Right cardiac atrium (tissue), 5 donors: ENCODE measurements at regions of chr20 and their contacts with region 1.

Region 1: DNA sequence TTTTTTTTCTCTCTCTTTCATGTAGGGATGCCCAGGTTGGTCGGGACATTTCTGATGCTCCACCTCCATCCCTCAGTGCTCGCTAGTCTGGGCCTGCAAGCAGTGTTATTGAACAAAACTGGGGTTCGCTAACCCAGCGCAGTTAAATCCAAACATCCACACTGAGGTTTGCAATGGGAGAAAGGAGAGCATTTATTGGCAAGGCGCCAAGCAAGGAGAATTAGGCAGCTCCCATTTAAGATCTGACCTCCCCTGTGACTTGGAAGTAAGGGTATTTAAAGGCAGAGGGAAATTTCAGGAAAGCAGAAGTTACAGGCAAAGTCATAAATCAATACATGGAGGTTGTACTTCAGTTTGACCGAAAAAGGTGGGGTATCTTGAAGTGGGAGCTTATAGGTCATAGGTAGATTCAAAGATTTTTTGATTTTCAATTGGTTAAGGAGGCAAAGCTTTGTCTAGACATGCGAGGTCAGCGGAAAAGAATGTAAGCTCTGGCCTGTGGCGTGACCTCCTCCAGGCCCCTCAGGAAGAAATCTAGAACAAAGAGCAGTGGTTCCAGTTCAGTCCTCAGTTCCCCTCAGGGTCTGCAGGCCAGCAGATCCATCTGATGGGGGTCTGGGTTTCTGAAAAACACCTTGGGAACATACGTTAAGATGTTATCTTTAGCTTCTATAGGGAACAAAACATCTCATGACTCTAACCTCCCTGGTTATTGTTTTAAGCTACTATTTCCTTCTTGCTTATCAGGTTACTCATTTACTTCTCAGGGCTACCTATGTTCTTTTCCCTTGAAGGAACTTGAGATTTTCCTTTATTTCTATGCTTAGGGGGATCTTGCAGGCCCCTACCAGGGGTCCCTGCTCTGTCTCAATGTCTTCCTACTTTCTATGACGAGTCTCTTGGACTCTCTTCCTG is 66.0 kb upstream of the KIF16B start:
- DNase-seq: no peak
- ATAC-seq: no peak
- H3K4me3 ChIP-seq: no peak overlapping the region
- H3K27ac ChIP-seq: no peak overlapping the region
- H3K4me1 ChIP-seq: no peaks in the 10 kb centered on the region
- H3K27me3 ChIP-seq: no peaks in the 10 kb centered on the region

Region 2: DNA sequence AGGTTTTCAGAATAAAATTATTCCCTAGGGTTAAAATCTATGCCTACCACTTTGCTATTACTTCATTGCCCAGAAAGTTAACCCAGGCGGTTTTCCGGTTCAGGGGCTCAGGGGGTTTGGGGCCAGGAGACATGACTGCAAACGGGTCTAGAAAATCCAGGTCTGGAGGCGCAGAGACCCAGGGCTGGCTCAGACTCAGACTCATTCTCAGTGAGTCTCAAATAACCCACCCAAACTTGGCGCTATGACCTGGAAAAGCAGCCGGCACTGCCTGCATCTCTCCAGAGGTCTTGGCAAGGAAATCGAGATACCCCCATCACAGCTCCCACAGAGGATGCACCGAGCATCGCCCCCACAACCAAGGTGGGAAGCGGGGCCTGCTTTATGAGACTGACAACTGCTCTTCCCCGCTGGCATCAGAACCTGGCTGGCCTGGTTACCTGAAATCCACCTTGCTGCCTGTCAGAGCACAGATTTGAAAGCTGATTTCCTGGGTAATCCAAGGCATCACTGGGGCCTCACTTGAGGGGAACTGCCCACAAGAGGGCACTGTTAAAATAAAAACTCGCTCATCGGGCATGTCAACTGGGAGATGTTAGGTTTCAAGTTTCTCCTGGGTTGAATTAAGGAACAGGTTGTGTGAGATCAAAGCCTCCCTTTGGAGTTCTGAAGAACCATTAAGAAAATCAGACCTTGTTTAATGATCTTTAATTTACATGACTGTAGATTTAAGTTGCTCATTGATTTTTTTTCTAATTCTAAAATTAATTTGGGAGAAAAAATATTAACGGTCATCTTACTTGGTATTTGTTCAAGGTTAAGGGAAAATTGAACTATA is 121.1 kb before region 1 on chr20:
- intact Hi-C with region 1: loop called in 1 of 4 experiments (anchors 5 kb)
- DNase-seq: peak in 1 of 3 donors; percentile 37
- ATAC-seq: peak; percentile 52 to 75
- H3K4me3 ChIP-seq: no peak overlapping the region
- H3K27ac ChIP-seq: no peak overlapping the region
- H3K4me1 ChIP-seq: no peaks in the 10 kb centered on the region
- H3K27me3 ChIP-seq: no peaks in the 10 kb centered on the region

Region 3: GRCh38 chr20:16821211-16822089 is 182.2 kb after region 1 on chr20:
- intact Hi-C with region 1: no loop called
- DNase-seq: peak in 1 of 3 donors; percentile 30
- ATAC-seq: no peak
- H3K4me3 ChIP-seq: no peak overlapping the region
- H3K27ac ChIP-seq: no peak overlapping the region
- H3K4me1 ChIP-seq: no peaks in the 10 kb centered on the region
- H3K27me3 ChIP-seq: no peaks in the 10 kb centered on the region

Region 4: DNA sequence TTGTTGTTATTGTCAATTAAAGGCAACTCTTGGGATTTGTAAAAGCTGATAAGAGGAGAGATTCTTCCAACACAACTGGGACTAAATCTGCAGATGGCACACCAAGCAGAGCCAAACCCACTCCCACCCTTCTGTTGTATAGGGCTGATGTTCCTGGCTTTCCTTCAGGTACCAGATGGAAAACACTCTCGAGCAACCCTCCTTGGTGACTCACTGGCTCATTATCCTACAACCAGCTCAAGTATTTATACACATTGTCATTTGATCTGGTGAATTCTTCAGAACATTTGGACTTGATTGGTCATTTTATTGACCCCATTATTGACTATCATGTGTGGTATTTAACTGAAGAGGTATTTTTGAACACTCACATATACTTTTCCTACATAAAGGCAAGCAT is 397.3 kb after region 1 on chr20:
- intact Hi-C with region 1: no loop called
- DNase-seq: no peak
- ATAC-seq: no peak
- H3K4me3 ChIP-seq: no peak overlapping the region
- H3K27ac ChIP-seq: no peak overlapping the region
- H3K4me1 ChIP-seq: no peaks in the 10 kb centered on the region
- H3K27me3 ChIP-seq: no peaks in the 10 kb centered on the region